ENCODE measurements at regions of chr11 and their contacts with region 1.

Region 1: GRCh38 chr11:47373876-47374720 is 4.2 kb downstream of the SPI1 start:
- DNase-seq: peak; percentile 84
- H3K4me3 Mint-ChIP-seq: no peak overlapping the region
- H3K27ac Mint-ChIP-seq: no peak overlapping the region
- H3K4me1 Mint-ChIP-seq: peaks cover 2% of the 10 kb centered on the region
- H3K27me3 Mint-ChIP-seq: no peaks in the 10 kb centered on the region

Region 2: GRCh38 chr11:47204637-47204989 is 169.5 kb before region 1 on chr11:
- CTCF ChIA-PET with region 1: no interaction called
- POLR2A ChIA-PET with region 1: no interaction called
- DNase-seq: no peak
- H3K4me3 Mint-ChIP-seq: no peak overlapping the region
- H3K27ac Mint-ChIP-seq: no peak overlapping the region
- H3K4me1 Mint-ChIP-seq: peaks cover 4% of the 10 kb centered on the region
- H3K27me3 Mint-ChIP-seq: peaks cover 7% of the 10 kb centered on the region

Region 3: GRCh38 chr11:47317064-47317828 is 56.9 kb before region 1 on chr11:
- CTCF ChIA-PET with region 1: interaction called, 11 read pairs
- POLR2A ChIA-PET with region 1: no interaction called
- DNase-seq: no peak
- H3K4me3 Mint-ChIP-seq: no peak overlapping the region
- H3K27ac Mint-ChIP-seq: peak overlapping the region; percentile 19
- H3K4me1 Mint-ChIP-seq: peaks cover 9% of the 10 kb centered on the region
- H3K27me3 Mint-ChIP-seq: no peaks in the 10 kb centered on the region

Region 4: GRCh38 chr11:47394322-47395222 is 20.5 kb after region 1 on chr11:
- CTCF ChIA-PET with region 1: interaction called, 63 read pairs
- POLR2A ChIA-PET with region 1: interaction called, 13 read pairs
- DNase-seq: peak; percentile 72
- H3K4me3 Mint-ChIP-seq: peak overlapping the region; percentile 37
- H3K27ac Mint-ChIP-seq: peak overlapping the region; percentile 87
- H3K4me1 Mint-ChIP-seq: peaks cover 45% of the 10 kb centered on the region
- H3K27me3 Mint-ChIP-seq: no peaks in the 10 kb centered on the region

Region 5: DNA sequence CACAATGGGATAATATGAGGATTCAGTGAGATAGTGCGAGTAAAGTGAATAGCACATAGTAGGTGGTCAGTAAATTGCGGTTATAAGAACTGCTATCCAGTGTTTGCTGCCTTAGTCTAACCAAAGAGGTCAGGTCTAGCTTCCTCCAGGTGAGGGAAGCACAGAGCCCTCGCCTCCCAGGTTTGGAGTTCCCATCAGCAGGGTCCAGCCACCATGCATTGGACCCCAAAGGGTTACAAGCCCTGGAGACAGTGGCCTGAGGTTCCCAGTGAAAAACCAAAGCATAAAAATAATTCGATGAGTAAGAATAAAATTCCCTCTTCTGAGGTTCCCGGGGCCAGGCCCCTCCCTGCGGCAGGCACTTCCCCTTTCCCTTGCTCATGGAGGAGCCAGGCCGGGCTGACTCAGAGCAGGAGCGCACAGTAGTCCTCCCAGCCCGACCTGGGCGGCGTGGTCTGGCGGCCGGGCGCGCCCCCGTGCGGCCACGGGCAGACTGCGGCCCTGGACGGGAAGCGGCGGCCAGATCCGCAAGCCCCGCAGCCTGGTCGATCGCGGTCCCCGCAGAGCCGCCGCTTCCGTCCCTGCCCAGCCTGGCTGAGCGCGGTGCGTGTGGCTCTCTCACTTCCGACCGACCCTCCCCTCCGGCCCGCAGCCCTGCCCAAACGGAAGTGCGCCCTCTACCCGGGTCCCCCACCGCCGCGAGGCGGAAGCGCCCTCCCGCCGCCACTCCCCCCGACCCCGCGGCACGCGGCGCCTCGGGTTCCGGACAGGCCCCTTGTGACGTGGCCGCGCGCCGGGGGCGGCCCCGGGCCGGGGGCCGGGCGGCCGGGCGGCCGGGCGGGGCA is 33.9 kb after region 1 on chr11 and contains the start of gene SLC39A13:
- CTCF ChIA-PET with region 1: interaction called, 98 read pairs
- POLR2A ChIA-PET with region 1: interaction called, 5 read pairs
- DNase-seq: peak; percentile 94
- H3K4me3 Mint-ChIP-seq: peak within 1 kb of the TSS; percentile 90
- H3K27ac Mint-ChIP-seq: peak within 1 kb of the TSS; percentile 85
- H3K4me1 Mint-ChIP-seq: peaks cover 21% of the 10 kb centered on the region
- H3K27me3 Mint-ChIP-seq: no peaks in the 10 kb centered on the region
- total RNA-seq, gene SLC39A13: 23.6 to 24.2 TPM

Region 6: DNA sequence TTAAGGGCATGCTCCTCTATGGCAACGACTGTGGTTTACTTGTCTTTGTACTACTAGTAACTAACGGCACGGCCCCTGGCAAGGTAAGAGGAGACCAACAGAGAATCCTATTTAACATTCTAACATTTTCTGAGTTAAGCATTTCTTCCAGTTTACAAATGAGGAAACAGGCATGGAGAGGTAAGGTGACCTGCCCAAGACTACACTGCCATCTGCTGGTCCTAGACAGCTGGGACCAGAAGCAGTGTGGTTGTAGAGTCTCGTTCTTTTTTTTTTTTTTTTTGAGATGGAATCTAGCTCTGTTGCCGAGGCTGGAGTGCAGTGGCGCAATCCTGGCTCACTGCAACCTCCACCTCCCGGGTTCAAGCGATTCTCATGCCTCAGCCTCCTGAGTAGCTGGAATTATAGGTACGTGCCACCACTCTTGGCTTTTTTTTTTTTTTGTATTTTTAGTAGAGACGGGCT is 80.1 kb after region 1 on chr11:
- CTCF ChIA-PET with region 1: interaction called, 20 read pairs
- POLR2A ChIA-PET with region 1: no interaction called
- DNase-seq: peak; percentile 76
- H3K4me3 Mint-ChIP-seq: no peak overlapping the region
- H3K27ac Mint-ChIP-seq: no peak overlapping the region
- H3K4me1 Mint-ChIP-seq: peaks cover 5% of the 10 kb centered on the region
- H3K27me3 Mint-ChIP-seq: no peaks in the 10 kb centered on the region

Region 7: GRCh38 chr11:47642099-47642855 is 268.2 kb after region 1 on chr11 and contains the start of gene MTCH2:
- CTCF ChIA-PET with region 1: no interaction called
- POLR2A ChIA-PET with region 1: no interaction called
- DNase-seq: peak; percentile 96
- H3K4me3 Mint-ChIP-seq: peak within 1 kb of the TSS; percentile 96
- H3K27ac Mint-ChIP-seq: peak within 1 kb of the TSS; percentile 88
- H3K4me1 Mint-ChIP-seq: peaks cover 25% of the 10 kb centered on the region
- H3K27me3 Mint-ChIP-seq: no peaks in the 10 kb centered on the region
- total RNA-seq, gene MTCH2: 87.8 to 91.7 TPM